HepG2 (cell line): ENCODE measurements at regions of chr6 and their contacts with region 1.

Region 1: DNA sequence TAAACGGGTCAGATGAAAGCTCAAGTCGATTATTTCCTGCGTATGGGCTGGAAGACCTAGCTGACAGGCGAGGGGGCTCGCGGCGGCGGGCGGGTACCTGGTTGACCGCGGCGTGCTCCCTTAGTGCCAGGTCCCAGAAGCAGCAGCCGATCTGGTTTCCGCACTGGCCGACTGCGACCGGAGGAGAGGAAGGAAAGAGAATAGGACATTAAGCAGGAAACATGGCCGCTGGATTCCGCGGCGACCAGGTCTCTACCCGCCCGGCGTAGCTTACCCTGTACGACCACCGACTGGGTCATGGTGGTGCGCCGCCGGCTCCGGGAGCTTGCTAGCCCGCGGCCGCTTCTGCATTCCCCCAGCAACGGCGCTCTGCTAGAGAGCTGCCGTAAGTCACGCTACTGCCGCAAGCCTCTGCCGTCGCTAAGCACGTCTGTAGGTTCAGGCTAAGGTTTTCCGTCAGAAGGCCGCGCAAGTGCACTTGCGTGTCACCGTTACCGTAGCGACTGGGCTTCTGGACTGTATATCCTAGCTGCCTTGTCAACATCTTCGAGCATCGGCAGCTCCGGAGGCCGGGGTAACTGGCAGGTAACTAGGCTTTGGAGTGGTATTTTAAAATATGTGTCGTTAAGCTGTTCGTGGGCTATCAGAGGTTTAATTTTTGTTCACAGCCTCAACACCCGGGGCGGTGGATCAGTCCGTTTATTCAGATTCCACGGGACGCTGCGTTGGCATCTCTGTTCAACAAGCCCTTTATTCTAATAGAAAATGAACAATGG is at the starts of genes FAM229B and TUBE1:
- DNase-seq: peak; percentile 94
- ATAC-seq: peak; percentile 96
- H3K4me3 ChIP-seq: peak within 1 kb of the TSS; percentile 75 to 97 (median 89)
- H3K27ac ChIP-seq: peak within 1 kb of the TSS; percentile 63
- H3K4me1 ChIP-seq: peaks cover 10% of the 10 kb centered on the region
- H3K27me3 ChIP-seq: no peaks in the 10 kb centered on the region; a peak in 1 of 5 replicates
- CTCF ChIP-seq: peak; percentile 54
- EP300 ChIP-seq: no peak
- POLR2A ChIP-seq: peak; percentile 74 to 95
- RAD21 ChIP-seq: 0 out of 2 replicates have a peak, but pooled peaks have one; percentile 24
- total RNA-seq, gene FAM229B: 19.5 and 23.7 TPM in 2 replicates
- total RNA-seq, gene TUBE1: 20.8 and 22.6 TPM in 2 replicates

Region 2: GRCh38 chr6:112149719-112150263 is 62.5 kb after region 1 on chr6:
- CTCF ChIA-PET with region 1: no interaction called
- POLR2A ChIA-PET with region 1: interaction called, 8 read pairs
- in situ Hi-C with region 1: no loop called
- intact Hi-C with region 1: loop called (anchors 5 kb)
- DNase-seq: no peak
- ATAC-seq: no peak
- H3K4me3 ChIP-seq: no peak overlapping the region
- H3K27ac ChIP-seq: no peak overlapping the region
- H3K4me1 ChIP-seq: peaks cover 7% of the 10 kb centered on the region
- H3K27me3 ChIP-seq: no peaks in the 10 kb centered on the region
- CTCF ChIP-seq: no peak
- EP300 ChIP-seq: no peak
- POLR2A ChIP-seq: no peak
- RAD21 ChIP-seq: no peak